Activated CD4-positive, alpha-beta memory T cell treated with anti-CD3 and anti-CD28 coated beads, Interleukin-2, amount 10 ng/mL, durations not matched to agents 7 days and 5 days (primary cell): ENCODE measurements at regions of chr17 and their contacts with region 1.

Region 1: GRCh38 chr17:51120739-51121617 is at the start of gene SPAG9:
- DNase-seq: peak; percentile 92
- H3K4me3 Mint-ChIP-seq: peak within 1 kb of the TSS; percentile 86
- H3K27ac Mint-ChIP-seq: peak within 1 kb of the TSS; percentile 96
- H3K4me1 Mint-ChIP-seq: peaks cover 49% of the 10 kb centered on the region
- H3K27me3 Mint-ChIP-seq: no peaks in the 10 kb centered on the region
- total RNA-seq, gene SPAG9: 50.9 to 53.0 TPM

Region 2: GRCh38 chr17:51029568-51030463 is 91.2 kb before region 1 on chr17:
- CTCF ChIA-PET with region 1: interaction called, 3 read pairs
- POLR2A ChIA-PET with region 1: interaction called, 19 read pairs
- DNase-seq: no peak
- H3K4me3 Mint-ChIP-seq: peak overlapping the region; percentile 70
- H3K27ac Mint-ChIP-seq: peak overlapping the region; percentile 86
- H3K4me1 Mint-ChIP-seq: peaks cover 26% of the 10 kb centered on the region
- H3K27me3 Mint-ChIP-seq: no peaks in the 10 kb centered on the region

Region 3: DNA sequence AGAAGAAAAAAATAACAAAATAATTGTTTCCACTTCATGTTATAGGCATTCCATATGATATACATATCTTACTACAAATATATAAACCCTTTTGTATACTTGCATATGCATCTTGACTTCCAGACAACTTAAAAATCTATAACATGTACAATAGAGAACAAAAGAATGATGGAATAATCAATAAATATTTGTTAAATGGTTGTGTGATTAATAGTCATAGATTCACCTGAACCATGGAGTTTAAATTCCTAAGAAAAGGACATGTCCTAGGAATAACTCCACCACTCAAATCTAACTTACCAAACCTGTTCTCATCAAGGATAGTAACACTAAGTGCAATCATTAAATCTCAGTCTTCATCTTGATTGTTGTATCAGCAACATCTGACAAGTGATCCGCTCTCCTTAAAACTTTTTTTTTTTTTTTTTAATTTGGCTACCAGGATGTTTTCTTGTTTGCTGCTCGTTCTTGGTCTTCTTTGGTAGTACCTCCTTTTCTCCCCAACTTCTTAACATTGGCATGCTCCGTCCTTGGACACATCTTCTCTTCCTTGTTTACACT is 41.0 kb before region 1 on chr17:
- CTCF ChIA-PET with region 1: no interaction called
- POLR2A ChIA-PET with region 1: no interaction called
- DNase-seq: no peak
- H3K4me3 Mint-ChIP-seq: no peak overlapping the region
- H3K27ac Mint-ChIP-seq: no peak overlapping the region
- H3K4me1 Mint-ChIP-seq: peaks cover 2% of the 10 kb centered on the region
- H3K27me3 Mint-ChIP-seq: no peaks in the 10 kb centered on the region

Region 4: DNA sequence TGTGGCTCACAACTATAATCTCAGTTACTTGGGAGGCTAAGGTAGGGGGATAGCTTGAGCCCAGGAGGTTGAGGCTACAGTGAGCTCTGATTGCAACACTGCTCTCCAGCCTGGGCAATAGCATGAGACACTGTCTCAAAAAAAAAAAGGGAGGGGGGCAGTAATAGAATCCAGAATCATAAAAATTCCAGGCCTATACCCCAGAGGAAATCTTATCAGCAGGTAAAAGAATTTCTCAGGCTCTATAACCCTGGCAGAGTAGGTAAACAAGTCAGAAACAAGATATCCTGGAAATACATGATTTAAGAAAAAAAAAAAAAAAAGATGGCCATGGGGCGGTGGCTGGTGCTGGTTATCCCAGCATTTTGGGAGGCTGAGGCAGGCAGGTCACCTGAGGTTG is 13.2 kb before region 1 on chr17:
- CTCF ChIA-PET with region 1: interaction called, 3 read pairs
- POLR2A ChIA-PET with region 1: interaction called, 21 read pairs
- DNase-seq: no peak
- H3K4me3 Mint-ChIP-seq: no peak overlapping the region
- H3K27ac Mint-ChIP-seq: no peak overlapping the region
- H3K4me1 Mint-ChIP-seq: peaks cover 10% of the 10 kb centered on the region
- H3K27me3 Mint-ChIP-seq: no peaks in the 10 kb centered on the region

Region 5: DNA sequence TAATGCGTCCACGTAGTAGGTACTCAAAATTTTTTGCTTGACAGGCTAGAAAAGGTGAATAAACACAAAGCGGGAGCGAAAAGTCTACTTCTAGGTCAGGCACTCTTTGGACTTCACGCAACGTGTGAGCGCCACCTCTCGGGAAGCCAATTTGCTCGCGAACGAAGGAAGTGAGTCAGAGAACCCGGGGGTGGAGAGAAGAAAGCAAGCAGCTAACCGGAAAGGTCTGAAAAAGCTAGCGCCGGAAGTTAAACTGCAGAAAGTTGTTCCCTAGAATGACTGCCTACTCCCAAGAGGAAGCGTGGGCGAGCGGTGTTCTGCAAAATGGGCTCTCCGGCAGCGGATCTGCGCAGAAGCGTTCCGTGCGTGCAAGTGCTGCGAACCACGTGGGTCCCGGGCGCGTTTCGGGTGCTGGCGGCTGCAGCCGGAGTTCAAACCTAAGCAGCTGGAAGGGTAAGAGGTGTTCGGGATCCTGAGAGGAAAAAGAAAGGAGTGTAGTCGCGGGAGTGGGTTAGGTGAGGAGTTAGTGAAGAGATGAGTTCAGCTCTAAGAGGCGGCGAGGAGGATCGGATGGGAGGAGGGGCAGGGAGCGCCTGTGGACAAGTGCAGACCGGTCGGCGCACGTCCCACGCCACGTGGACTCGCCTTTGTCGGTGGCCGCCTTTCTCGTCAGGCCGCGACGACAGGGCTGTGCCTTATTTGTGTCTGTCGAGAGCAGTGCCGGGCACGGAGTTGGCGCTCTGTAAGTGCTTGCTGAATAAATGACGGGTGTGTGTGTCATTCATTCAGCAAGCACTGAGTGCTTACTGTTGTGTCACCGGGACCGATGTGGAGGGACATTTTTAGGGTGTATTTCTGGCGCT is 32.5 kb after region 1 on chr17 and contains the start of gene NME1:
- CTCF ChIA-PET with region 1: interaction called, 23 read pairs
- POLR2A ChIA-PET with region 1: interaction called, 40 read pairs
- DNase-seq: peak; percentile 98
- H3K4me3 Mint-ChIP-seq: no peak within 1 kb of the TSS
- H3K27ac Mint-ChIP-seq: no peak within 1 kb of the TSS
- H3K4me1 Mint-ChIP-seq: peaks cover 10% of the 10 kb centered on the region
- H3K27me3 Mint-ChIP-seq: no peaks in the 10 kb centered on the region
- total RNA-seq, gene NME1: 87.9 to 90.8 TPM

Region 6: DNA sequence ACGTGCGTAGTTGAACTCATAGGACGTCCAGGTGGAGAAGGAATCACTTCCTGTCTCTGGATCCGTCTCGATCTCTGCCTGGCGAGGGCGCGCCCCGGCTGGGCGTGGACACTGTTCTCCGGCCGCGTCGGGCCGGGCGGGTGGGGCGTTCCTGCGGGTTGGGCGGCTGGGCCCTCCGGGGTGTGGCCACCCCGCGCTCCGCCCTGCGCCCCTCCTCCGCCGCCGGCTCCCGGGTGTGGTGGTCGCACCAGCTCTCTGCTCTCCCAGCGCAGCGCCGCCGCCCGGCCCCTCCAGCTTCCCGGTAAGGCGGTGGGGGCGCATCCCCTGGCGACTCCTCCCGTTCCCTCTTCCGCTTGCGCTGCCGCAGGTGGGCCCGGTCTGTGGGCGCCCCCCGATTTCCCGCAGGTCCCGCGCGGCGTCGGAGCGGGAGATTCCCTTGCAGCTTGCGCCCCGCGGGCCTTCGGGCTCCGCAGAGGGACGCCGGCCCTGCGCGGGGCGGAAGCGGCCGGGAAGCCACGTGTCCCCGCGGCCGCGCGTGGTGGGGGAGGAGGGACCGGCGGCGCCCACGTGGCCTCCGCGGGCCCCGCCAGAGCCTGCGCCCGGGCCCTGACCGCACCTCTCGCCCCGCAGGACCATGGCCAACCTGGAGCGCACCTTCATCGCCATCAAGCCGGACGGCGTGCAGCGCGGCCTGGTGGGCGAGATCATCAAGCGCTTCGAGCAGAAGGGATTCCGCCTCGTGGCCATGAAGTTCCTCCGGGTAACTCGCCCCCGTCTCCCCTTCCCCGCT is 45.4 kb after region 1 on chr17 and contains the start of gene NME2:
- CTCF ChIA-PET with region 1: no interaction called
- POLR2A ChIA-PET with region 1: interaction called, 12 read pairs
- DNase-seq: peak; percentile 73
- H3K4me3 Mint-ChIP-seq: peak within 1 kb of the TSS; percentile 89
- H3K27ac Mint-ChIP-seq: peak within 1 kb of the TSS; percentile 93
- H3K4me1 Mint-ChIP-seq: peaks cover 39% of the 10 kb centered on the region
- H3K27me3 Mint-ChIP-seq: no peaks in the 10 kb centered on the region
- total RNA-seq, gene NME2: 364 to 374 TPM

Region 7: DNA sequence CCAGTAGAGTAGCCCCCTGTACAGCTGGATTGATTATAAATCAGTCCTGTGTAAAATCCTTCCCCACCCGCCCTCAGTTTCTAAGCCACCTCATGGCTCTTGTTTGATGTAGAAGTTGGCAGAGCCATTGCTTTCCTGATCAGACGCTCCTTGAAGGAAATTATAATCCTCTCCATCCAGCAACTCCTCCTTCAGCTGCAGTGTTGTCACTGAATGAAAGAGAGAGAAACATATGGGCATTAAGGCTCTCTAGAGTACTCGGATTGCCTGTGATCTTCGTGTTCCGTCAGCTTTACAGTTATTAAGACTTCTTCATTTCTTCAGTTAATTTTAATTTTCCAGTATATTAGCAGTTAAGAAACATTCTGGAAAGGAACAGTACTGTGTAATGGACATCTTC is 59.5 kb after region 1 on chr17:
- CTCF ChIA-PET with region 1: no interaction called
- POLR2A ChIA-PET with region 1: no interaction called
- DNase-seq: no peak
- H3K4me3 Mint-ChIP-seq: no peak overlapping the region
- H3K27ac Mint-ChIP-seq: no peak overlapping the region
- H3K4me1 Mint-ChIP-seq: no peaks in the 10 kb centered on the region
- H3K27me3 Mint-ChIP-seq: no peaks in the 10 kb centered on the region

Region 8: DNA sequence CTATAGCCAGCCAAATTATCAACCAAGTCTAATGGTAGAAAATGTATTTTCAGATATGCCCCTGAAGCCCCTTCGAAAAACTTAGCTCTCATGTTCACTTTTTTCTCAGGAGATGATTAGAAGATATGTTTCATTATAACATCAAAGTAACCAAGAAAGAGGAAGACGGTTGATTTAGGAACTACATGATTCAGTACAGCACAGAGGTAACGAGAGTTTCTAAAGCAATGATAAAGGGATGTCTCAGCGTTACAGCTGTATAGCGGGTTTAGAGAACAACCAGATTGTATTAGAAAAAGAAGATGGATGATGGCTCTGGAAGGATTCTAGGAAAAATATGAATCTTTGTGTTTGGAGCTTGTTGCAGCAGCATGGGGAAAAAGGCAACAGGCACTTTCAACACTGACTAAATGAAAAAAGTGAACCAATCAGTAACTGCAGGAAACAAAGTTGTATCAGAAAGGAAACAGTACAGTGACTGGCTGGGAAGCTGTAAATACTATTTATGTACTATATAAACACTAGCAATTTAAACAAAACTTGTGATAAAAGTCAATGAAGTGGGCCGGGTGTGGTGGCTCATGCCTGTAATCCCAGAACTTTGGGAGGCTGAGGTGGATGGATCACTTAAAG is 117.4 kb after region 1 on chr17:
- CTCF ChIA-PET with region 1: no interaction called
- POLR2A ChIA-PET with region 1: no interaction called
- DNase-seq: no peak
- H3K4me3 Mint-ChIP-seq: peak overlapping the region; percentile 21
- H3K27ac Mint-ChIP-seq: peak overlapping the region; percentile 38
- H3K4me1 Mint-ChIP-seq: peaks cover 21% of the 10 kb centered on the region
- H3K27me3 Mint-ChIP-seq: no peaks in the 10 kb centered on the region